Activated naive CD4-positive, alpha-beta T cell treated with anti-CD3 and anti-CD28 coated beads for 36 hours (primary cell): ENCODE measurements at regions of chr4 and their contacts with region 1.

Region 1: GRCh38 chr4:22500831-22501719 is 14.8 kb downstream of the ADGRA3 start:
- DNase-seq: peak; percentile 72
- H3K4me3 Mint-ChIP-seq: no peak overlapping the region
- H3K27ac Mint-ChIP-seq: peak overlapping the region; percentile 72
- H3K4me1 Mint-ChIP-seq: peaks cover 24% of the 10 kb centered on the region
- H3K27me3 Mint-ChIP-seq: no peaks in the 10 kb centered on the region

Region 2: DNA sequence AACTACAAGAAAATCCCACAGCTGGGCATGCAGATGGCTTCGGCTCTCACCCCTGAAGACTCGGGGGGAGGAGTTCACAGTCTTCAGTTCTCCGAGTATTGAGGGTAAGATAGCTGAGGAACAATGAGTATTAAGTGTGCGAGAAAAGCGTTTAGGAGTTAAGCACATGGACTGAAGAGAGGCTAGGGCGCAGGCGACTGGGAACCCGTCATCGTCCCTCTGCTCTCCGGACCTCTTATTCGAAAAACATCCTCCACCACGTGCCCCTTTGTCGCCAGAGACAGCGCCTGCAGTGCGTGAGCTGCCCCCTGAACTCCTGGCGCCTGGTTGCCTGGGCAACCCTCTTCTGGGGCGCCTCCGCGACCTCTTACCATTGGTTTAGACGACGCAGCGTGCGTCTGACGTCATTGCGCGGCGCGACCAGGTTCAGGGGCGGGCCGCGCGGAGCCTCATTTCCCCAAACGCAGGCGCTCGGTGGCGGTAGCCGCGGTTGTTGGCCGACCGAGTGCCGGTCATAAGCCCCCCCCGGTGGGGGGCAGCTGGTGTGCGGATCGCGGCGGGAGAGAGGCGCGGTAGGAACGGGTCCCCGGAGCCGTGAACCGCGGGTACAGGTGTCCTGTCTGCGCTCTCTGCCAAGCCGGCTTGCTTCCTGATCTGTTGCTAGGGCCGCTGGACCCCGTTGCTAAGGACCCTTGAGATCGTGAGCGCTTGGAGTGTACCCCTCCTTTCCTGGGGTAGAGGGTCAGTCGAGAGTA is 1800.9 kb before region 1 on chr4 and contains the start of gene PACRGL:
- CTCF ChIA-PET with region 1: no interaction called
- intact Hi-C with region 1: loop called (anchors 10 kb)
- DNase-seq: peak; percentile 93
- H3K4me3 Mint-ChIP-seq: peak within 1 kb of the TSS; percentile 89
- H3K27ac Mint-ChIP-seq: peak within 1 kb of the TSS; percentile 85
- H3K4me1 Mint-ChIP-seq: peaks cover 30% of the 10 kb centered on the region
- H3K27me3 Mint-ChIP-seq: no peaks in the 10 kb centered on the region
- total RNA-seq, gene PACRGL: 13.0 to 13.1 TPM

Region 3: GRCh38 chr4:22444813-22445212 is 56.3 kb before region 1 on chr4:
- CTCF ChIA-PET with region 1: no interaction called
- intact Hi-C with region 1: loop called (anchors 1 kb)
- DNase-seq: peak; percentile 9
- H3K4me3 Mint-ChIP-seq: peak overlapping the region; percentile 10
- H3K27ac Mint-ChIP-seq: peak overlapping the region; percentile 93
- H3K4me1 Mint-ChIP-seq: peaks cover 40% of the 10 kb centered on the region
- H3K27me3 Mint-ChIP-seq: no peaks in the 10 kb centered on the region

Region 4: GRCh38 chr4:22573198-22573597 is 72.1 kb after region 1 on chr4:
- CTCF ChIA-PET with region 1: no interaction called
- intact Hi-C with region 1: loop called (anchors 1 kb)
- DNase-seq: no peak
- H3K4me3 Mint-ChIP-seq: no peak overlapping the region
- H3K27ac Mint-ChIP-seq: no peak overlapping the region
- H3K4me1 Mint-ChIP-seq: peaks cover 7% of the 10 kb centered on the region
- H3K27me3 Mint-ChIP-seq: no peaks in the 10 kb centered on the region

Region 5: DNA sequence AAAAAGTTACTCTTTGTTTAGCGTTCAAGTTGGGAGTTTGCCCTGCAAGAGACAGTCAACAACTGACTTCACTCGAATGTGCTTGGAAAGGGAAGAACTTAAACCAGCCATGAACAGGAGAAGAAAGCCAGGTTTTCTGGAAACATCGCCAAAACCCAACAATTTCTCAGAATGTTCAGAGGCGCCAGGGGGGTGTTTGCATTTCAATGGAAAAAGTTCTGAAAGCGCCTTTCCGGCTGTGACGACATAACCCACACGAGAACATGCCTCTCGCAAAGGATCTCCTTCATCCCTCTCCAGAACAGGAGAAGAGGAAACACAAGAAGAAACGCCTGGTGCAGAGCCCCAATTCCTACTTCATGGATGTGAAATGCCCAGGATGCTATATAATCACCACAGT is 92.9 kb after region 1 on chr4:
- CTCF ChIA-PET with region 1: no interaction called
- intact Hi-C with region 1: no loop called
- DNase-seq: no peak
- H3K4me3 Mint-ChIP-seq: no peak overlapping the region
- H3K27ac Mint-ChIP-seq: no peak overlapping the region
- H3K4me1 Mint-ChIP-seq: peaks cover 10% of the 10 kb centered on the region
- H3K27me3 Mint-ChIP-seq: no peaks in the 10 kb centered on the region

Region 6: GRCh38 chr4:22668301-22668700 is 167.2 kb after region 1 on chr4:
- CTCF ChIA-PET with region 1: no interaction called
- intact Hi-C with region 1: loop called (anchors 1 kb)
- DNase-seq: no peak
- H3K4me3 Mint-ChIP-seq: no peak overlapping the region
- H3K27ac Mint-ChIP-seq: peak overlapping the region; percentile 65
- H3K4me1 Mint-ChIP-seq: peaks cover 49% of the 10 kb centered on the region
- H3K27me3 Mint-ChIP-seq: no peaks in the 10 kb centered on the region